Mammary epithelial cell (primary cell): ENCODE measurements at regions of chr3 and their contacts with region 1.

Region 1: DNA sequence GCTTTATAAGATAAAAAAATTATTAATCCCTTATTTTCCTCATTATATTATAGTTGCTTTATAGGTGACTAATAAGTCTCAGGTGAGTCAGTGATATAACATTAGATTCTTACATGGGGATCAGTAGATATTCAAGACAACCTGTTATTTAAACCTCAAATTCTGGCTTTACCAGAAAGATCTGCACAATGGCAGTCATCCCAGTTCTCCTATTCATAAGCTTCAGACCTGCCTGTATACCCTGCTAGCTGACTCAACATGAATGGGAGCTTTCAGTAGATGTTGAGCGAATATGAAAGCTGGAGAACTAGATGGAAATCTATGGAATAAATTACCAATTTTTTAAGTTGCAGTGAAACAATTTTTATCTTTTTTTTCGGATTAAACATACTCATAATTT is 20.5 kb upstream of the CCDC54 start:
- DNase-seq: peak; percentile 27
- H3K4me3 ChIP-seq: no peak overlapping the region
- H3K27ac ChIP-seq: no peak overlapping the region
- H3K4me1 ChIP-seq: no peaks in the 10 kb centered on the region
- H3K27me3 ChIP-seq: no peaks in the 10 kb centered on the region
- CTCF ChIP-seq: no peak

Region 2: DNA sequence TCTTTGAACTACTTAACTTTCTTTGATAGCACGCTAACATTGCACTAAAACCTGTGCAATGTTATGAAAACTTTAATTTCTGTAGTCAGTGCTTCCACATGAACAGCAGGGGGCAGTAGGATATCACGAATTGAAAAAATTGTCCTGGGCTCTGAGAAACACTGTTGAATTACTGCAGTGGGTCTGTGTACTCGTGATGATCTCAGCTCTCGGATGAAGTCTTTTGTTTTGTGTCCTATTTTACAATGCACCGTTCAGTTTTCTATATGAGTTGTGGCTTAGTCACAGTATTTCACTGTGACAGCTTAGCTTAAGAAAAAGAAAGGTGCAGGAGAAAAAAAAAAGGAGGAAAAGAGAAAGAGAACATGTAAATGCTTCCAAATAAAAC is 120.8 kb before region 1 on chr3:
- CTCF ChIA-PET with region 1: no interaction called
- dilution Hi-C with region 1: no loop called
- in situ Hi-C with region 1: no loop called
- intact Hi-C with region 1: no loop called
- DNase-seq: peak; percentile 86
- H3K4me3 ChIP-seq: peak overlapping the region; percentile 37 to 69 (median 57)
- H3K27ac ChIP-seq: peak overlapping the region; percentile 77
- H3K4me1 ChIP-seq: peaks cover 17% of the 10 kb centered on the region
- H3K27me3 ChIP-seq: no peaks in the 10 kb centered on the region
- CTCF ChIP-seq: peak; percentile 81 to 86

Region 3: DNA sequence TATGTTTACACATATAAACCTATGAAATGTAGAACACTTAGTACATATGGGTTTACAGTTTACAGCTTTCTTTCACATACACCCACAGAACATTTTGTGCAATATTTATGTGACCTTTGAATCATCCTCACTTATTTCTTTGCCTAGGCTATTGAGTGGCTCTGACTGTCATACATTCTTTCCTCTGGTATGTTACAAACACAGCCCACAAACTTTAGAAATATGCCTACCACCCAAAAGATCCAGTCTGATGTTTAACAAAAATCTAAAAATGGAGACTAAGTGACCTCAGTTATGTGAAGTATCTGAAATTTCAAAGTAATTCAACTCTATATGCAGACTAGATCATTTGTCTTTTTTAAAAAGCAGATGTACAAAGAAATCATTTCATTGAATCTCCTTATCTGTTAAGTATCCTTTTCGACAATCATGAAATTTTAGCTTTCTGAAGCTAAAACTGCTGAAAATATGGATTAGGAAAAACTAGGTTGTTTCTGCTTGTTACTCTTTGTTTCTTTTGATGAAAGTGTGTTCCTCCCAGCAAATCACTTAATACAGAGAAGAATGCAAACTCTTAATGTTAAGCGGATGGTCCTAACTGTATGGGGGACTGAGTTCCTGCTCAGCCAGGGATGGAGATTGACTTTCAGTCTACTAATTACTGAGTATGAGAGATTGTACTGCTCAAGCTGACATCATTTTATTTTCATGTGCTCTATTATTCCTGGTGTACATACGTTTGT is 48.2 kb after region 1 on chr3:
- CTCF ChIA-PET with region 1: no interaction called
- dilution Hi-C with region 1: loop called (anchors 5 kb)
- in situ Hi-C with region 1: no loop called
- intact Hi-C with region 1: no loop called
- DNase-seq: peak; percentile 17
- H3K4me3 ChIP-seq: no peak overlapping the region
- H3K27ac ChIP-seq: no peak overlapping the region
- H3K4me1 ChIP-seq: no peaks in the 10 kb centered on the region
- H3K27me3 ChIP-seq: no peaks in the 10 kb centered on the region
- CTCF ChIP-seq: no peak